SK-N-SH (cell line): ENCODE measurements at regions of chr1 and their contacts with region 1.

Region 1: GRCh38 chr1:89974701-89975470 is 20.0 kb upstream of the ZNF326 start:
- DNase-seq: no peak
- H3K4me3 ChIP-seq: no peak overlapping the region
- H3K27ac ChIP-seq: peak overlapping the region in 1 of 2 experiments; percentile 26; a peak in 2 of 4 replicates
- H3K4me1 ChIP-seq: peaks cover 0 to 6% of the 10 kb centered on the region in 2 experiments; a peak in 2 of 4 replicates
- H3K27me3 ChIP-seq: no peaks in the 10 kb centered on the region
- CTCF ChIP-seq: no peak
- EP300 ChIP-seq: no peak
- RAD21 ChIP-seq: no peak

Region 2: DNA sequence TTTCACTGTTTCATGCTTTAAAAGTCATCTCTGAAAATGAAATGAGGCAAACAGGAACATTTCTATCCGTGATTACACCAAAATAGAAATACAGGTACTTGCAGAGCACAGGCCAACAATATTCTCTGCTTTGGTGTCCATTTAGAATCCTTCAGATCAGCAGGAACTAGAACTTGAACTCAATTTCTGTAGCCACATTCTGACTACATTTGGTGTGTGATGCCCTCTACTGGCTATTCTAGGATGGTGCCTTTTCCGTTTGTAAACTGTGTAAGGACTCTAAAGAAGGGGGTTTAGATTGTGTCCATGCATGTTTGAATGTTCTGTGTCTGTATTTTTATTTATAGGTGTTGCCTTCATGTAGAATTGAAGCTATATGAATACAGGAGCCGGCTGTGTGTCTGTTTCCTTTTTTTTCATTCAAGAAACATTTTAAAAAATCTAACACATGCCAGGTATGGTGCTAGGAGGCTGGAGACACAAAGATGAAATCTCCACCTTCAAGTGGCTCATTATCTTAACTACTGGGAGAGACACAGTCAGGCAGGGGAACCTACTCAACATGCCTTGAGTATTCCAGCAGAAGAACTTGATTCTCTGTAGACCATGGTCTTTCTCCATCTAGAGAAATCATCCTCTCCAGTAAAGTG is 12.4 kb after region 1 on chr1:
- CTCF ChIA-PET with region 1: interaction called, 23 read pairs
- POLR2A ChIA-PET with region 1: no interaction called
- DNase-seq: peak; percentile 81
- H3K4me3 ChIP-seq: no peak overlapping the region; a peak in 1 of 4 replicates
- H3K27ac ChIP-seq: no peak overlapping the region
- H3K4me1 ChIP-seq: peaks cover 0 to 5% of the 10 kb centered on the region in 2 experiments; a peak in 3 of 4 replicates
- H3K27me3 ChIP-seq: no peaks in the 10 kb centered on the region
- CTCF ChIP-seq: peak; percentile 90
- EP300 ChIP-seq: no peak
- RAD21 ChIP-seq: peak; percentile 97